ENCODE measurements at regions of chr15 and their contacts with region 1.

Region 1: DNA sequence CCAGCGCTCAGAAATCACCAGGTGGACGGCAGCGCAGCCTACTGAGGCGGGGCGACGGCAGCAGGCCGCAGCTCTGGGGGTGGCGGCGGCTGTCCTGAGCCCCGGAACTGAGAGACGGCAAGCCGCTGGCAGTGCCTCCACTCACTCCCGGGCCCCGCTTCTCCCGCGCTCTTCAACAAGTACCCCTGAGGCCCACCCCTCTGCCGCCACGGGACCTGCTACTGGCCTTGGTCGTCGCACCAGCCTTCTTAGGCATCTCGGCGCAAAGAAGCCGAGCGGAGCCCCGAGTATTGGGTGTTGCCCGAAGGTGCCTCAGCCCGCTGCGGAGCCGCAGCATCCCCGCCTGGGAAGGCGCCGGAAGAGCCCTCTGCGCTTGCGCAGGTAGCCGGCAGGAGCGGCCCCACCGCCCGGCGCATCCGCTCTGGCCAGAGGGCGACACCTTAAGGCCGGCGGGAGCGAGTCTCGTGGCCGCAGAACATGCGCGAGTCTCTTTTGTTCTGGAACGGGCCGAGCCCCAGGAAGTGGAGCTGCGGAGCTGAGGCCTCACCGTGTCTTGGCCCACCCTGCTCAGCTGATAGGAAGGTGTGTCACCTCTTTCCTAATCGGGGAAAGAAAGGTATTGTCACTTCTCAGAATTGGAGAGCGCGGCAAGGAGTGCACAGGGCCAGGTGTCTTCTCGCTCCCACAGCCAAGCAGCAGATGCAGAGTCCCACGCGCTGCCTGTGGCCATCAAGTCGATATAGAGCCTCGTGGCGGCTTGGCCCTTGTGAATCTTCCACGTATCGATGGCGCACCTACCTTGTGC is at the start of gene C15orf40:
- DNase-seq: peak; percentile 90
- H3K4me3 Mint-ChIP-seq: peak within 1 kb of the TSS; percentile 90
- H3K27ac Mint-ChIP-seq: peak within 1 kb of the TSS; percentile 89
- H3K4me1 Mint-ChIP-seq: peaks cover 44% of the 10 kb centered on the region
- H3K27me3 Mint-ChIP-seq: no peaks in the 10 kb centered on the region
- total RNA-seq, gene C15orf40: 21.8 to 26.3 TPM

Region 2: DNA sequence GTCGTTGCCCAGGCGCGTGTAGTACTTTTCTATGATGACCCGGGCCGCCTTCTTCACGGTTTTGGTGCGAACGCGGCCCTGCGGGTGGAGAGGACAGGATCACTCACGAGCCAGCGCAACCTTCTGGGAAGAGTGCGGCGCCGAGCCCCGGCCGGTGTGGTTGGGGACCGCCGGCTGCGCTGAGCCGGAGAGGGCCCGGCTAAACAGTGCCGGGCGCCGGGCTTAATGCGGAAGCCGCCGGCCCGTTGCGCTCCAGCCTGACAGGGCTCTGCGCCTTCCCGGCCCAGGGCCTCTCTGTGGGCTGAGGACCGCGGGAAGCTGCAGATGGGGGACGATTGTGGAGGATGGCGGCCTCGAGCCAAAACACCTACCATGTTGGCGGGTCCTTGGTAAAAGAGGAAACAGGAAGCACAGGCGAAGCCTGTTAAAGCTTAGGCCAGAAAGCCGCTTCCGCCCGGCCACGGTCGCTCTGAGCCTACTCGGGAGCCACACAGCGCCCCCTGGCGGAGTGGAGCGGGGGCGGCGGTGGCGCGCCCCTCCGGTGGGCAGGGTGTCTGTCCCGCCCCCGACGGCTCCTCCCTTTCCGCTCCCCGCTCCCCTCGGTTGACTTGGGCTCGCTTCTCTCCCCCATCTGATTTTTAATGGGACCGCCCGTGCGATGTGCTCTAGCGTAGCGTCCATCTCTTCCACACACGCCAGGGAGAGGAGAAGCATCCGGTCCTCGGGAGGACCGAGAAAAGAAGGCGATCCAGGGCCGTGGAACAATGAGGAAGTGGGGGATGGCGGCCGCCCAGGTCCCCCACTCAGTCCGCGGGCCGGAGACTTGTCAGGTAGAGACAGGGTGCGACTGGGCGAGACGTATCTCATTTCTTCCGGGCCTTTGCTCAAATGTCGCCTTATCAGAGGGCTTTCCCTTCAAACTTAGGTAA is 471.2 kb before region 1 on chr15 and contains the start of gene RPS17:
- CTCF ChIA-PET with region 1: interaction called, 14 read pairs
- POLR2A ChIA-PET with region 1: interaction called, 6 read pairs
- intact Hi-C with region 1: loop called (anchors 2 kb)
- DNase-seq: peak; percentile 98
- H3K4me3 Mint-ChIP-seq: peak within 1 kb of the TSS; percentile 98
- H3K27ac Mint-ChIP-seq: peak within 1 kb of the TSS; percentile 88
- H3K4me1 Mint-ChIP-seq: peaks cover 27% of the 10 kb centered on the region
- H3K27me3 Mint-ChIP-seq: peaks cover 2% of the 10 kb centered on the region
- total RNA-seq, gene RPS17: 2,581 to 2,594 TPM

Region 3: GRCh38 chr15:82749951-82750830 is 261.3 kb before region 1 on chr15:
- CTCF ChIA-PET with region 1: interaction called, 5 read pairs
- POLR2A ChIA-PET with region 1: interaction called, 3 read pairs
- intact Hi-C with region 1: loop called (anchors 5 kb)
- DNase-seq: peak; percentile 92
- H3K4me3 Mint-ChIP-seq: peak overlapping the region; percentile 96
- H3K27ac Mint-ChIP-seq: peak overlapping the region; percentile 93
- H3K4me1 Mint-ChIP-seq: peaks cover 41% of the 10 kb centered on the region
- H3K27me3 Mint-ChIP-seq: no peaks in the 10 kb centered on the region

Region 4: DNA sequence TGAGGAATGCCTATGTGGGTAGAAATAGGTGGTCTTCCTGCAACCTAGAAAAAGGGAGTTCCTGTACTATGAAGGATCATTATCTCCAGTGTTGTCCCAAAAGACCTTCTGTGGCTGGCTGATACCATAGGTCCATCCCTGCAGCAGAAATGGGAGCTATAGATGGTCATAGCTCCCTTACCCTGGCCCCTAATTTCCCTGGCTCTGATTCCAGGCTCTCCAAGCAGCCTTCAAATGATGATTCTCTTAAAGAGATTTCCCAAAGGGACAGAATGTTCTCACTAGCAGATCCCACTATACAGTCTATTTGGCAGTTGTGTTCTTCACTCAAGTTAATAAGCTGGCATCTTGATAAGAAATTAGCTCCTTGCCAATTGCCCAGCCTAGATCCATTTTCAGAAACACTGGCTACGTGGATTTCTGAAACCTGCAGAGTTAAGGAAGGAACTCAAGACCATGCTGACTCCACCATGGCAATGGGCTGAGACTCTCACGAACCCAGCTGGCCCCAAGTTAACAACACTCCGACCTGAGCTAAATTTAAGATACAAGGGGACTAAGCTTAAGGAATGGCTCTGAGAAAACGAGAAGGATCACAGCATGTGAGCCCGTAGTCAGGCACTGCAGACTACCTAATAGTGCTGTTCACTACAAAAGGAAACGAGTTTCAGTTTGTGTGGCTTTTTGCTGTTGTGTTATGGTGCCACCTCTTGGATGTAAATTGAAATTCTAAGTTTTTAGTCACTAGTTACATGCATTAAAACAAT is 11.4 kb before region 1 on chr15:
- CTCF ChIA-PET with region 1: interaction called, 39 read pairs
- POLR2A ChIA-PET with region 1: interaction called, 5 read pairs
- intact Hi-C with region 1: no loop called
- DNase-seq: peak; percentile 19
- H3K4me3 Mint-ChIP-seq: peak overlapping the region; percentile 36
- H3K27ac Mint-ChIP-seq: no peak overlapping the region
- H3K4me1 Mint-ChIP-seq: peaks cover 7% of the 10 kb centered on the region
- H3K27me3 Mint-ChIP-seq: no peaks in the 10 kb centered on the region

Region 5: GRCh38 chr15:83030021-83030420 is 18.5 kb after region 1 on chr15:
- CTCF ChIA-PET with region 1: no interaction called
- POLR2A ChIA-PET with region 1: no interaction called
- intact Hi-C with region 1: no loop called
- DNase-seq: no peak
- H3K4me3 Mint-ChIP-seq: no peak overlapping the region
- H3K27ac Mint-ChIP-seq: no peak overlapping the region
- H3K4me1 Mint-ChIP-seq: no peaks in the 10 kb centered on the region
- H3K27me3 Mint-ChIP-seq: no peaks in the 10 kb centered on the region

Region 6: DNA sequence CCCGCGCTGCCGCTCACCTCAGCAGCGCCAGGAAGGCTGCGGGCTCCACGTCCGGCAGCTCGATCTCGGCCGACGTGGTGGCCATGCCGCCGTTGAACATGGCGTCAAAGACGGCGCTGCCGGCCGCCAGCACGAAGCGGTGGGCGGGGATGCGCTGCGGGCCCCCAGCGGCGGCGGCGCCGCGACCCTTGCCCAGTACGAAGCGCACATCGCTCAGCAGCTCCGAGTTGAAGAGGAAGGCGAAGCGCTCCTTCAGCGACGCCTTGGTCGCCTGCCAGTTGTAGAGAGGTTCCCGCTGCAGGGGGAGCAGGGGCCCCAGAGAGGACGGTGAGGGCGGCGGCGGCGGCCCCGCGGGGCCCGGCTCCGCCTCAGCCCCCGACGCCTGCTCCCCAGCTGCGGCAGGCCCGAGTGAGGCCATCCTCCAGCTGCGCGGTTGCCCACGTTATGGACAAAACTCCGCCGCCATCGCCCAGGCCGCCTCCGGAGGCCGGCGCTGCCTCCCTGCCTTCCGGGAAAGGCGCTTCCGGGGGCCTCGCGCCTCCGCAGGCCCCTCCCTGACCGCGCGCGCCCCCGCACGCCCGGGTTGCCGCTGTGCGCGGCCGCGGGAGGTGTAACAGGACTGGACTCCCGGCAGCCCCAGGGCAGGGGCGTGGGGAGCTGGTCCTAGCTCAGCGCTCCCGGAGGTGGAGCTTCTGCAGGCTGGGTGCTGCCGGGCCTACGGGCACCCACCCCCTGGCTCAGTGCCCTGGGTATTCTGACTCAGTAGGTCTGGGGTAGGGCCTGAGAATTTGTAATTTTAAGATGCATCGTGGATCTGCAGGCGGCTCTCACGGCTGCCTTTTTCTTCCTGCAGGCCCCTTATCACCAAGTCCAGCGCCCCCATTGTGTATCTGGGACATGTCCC is 55.5 kb after region 1 on chr15 and contains the start of gene BTBD1:
- CTCF ChIA-PET with region 1: interaction called, 12 read pairs
- POLR2A ChIA-PET with region 1: interaction called, 5 read pairs
- intact Hi-C with region 1: loop called (anchors 1 kb)
- DNase-seq: peak; percentile 96
- H3K4me3 Mint-ChIP-seq: peak within 1 kb of the TSS; percentile 86
- H3K27ac Mint-ChIP-seq: peak within 1 kb of the TSS; percentile 85
- H3K4me1 Mint-ChIP-seq: peaks cover 27% of the 10 kb centered on the region
- H3K27me3 Mint-ChIP-seq: no peaks in the 10 kb centered on the region
- total RNA-seq, gene BTBD1: 52.9 to 53.3 TPM

Region 7: DNA sequence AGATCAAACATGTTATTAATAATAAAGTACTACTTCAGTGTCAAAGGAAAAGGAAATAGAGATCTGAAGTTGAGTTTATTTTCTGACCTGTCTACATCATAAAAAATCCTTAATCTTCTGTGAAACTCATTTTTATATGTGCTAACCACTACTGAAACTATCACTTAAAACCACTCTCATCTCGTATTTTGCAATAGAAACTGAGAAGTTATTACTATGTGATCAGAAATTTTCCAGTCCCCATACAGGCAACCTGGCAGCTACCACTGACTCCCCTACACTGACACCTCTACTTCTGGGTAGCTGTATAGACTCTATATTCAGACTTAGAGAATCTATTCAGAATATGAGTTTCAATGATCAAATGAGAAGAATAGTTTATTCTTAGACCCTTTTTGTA is 187.8 kb after region 1 on chr15:
- CTCF ChIA-PET with region 1: interaction called, 3 read pairs
- POLR2A ChIA-PET with region 1: no interaction called
- intact Hi-C with region 1: loop called (anchors 2 kb)
- DNase-seq: peak; percentile 22
- H3K4me3 Mint-ChIP-seq: no peak overlapping the region
- H3K27ac Mint-ChIP-seq: no peak overlapping the region
- H3K4me1 Mint-ChIP-seq: peaks cover 18% of the 10 kb centered on the region
- H3K27me3 Mint-ChIP-seq: peaks cover 19% of the 10 kb centered on the region

Region 8: GRCh38 chr15:83592370-83593040 is 581.0 kb after region 1 on chr15:
- CTCF ChIA-PET with region 1: no interaction called
- POLR2A ChIA-PET with region 1: no interaction called
- intact Hi-C with region 1: no loop called
- DNase-seq: no peak
- H3K4me3 Mint-ChIP-seq: no peak overlapping the region
- H3K27ac Mint-ChIP-seq: no peak overlapping the region
- H3K4me1 Mint-ChIP-seq: no peaks in the 10 kb centered on the region
- H3K27me3 Mint-ChIP-seq: peaks cover 3% of the 10 kb centered on the region